ENCODE measurements at regions of chr3 and their contacts with region 1.

Region 1: GRCh38 chr3:195512798-195513345 is 30.3 kb downstream of the PPP1R2 start:
- DNase-seq: peak in 1 of 2 experiments; percentile 31
- H3K4me3 ChIP-seq: no peak overlapping the region
- H3K27ac ChIP-seq: no peak overlapping the region
- H3K4me1 ChIP-seq: no peaks in the 10 kb centered on the region
- H3K27me3 ChIP-seq: no peaks in the 10 kb centered on the region
- CTCF ChIP-seq: no peak

Region 2: GRCh38 chr3:194486540-194487288 is 1026.2 kb before region 1 on chr3 and contains the start of gene ATP13A3:
- CTCF ChIA-PET with region 1: no interaction called
- POLR2A ChIA-PET with region 1: no interaction called
- intact Hi-C with region 1: no loop called
- DNase-seq: peak; percentile 80 to 93
- H3K4me3 ChIP-seq: peak within 1 kb of the TSS; percentile 64
- H3K27ac ChIP-seq: peak within 1 kb of the TSS; percentile 96
- H3K4me1 ChIP-seq: peaks cover 71% of the 10 kb centered on the region
- H3K27me3 ChIP-seq: no peaks in the 10 kb centered on the region
- CTCF ChIP-seq: no peak
- total RNA-seq, gene ATP13A3: 203 and 242 TPM in 2 replicates

Region 3: DNA sequence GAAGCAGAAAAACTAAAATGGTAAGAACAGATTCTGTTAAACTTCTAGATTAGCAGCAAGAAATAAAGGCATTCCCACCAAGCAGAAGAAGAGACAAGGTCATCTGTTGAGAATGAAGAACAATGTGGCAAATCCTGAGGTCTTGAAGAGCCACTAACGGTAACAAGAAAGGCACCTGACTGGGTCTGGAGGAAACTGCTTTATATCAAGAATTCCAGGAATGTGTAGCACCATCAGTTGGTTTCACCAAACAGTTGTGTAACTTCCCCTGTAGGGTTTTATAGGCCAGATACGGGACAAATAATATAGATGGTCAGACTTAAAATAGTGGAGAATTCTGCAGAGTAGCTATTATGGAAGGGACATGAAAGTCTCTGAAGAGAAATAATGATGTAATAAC is 127.3 kb before region 1 on chr3:
- CTCF ChIA-PET with region 1: interaction called, 5 read pairs
- POLR2A ChIA-PET with region 1: interaction called, 13 read pairs
- intact Hi-C with region 1: no loop called
- DNase-seq: peak; percentile 10 to 77
- H3K4me3 ChIP-seq: no peak overlapping the region
- H3K27ac ChIP-seq: 0 out of 2 replicates have a peak overlapping the region, but pooled peaks have one; percentile 1
- H3K4me1 ChIP-seq: peaks cover 35% of the 10 kb centered on the region
- H3K27me3 ChIP-seq: no peaks in the 10 kb centered on the region
- CTCF ChIP-seq: no peak

Measured in PC-9 (cell line).